ENCODE measurements at regions of chr3 and their contacts with region 1.

Region 1: DNA sequence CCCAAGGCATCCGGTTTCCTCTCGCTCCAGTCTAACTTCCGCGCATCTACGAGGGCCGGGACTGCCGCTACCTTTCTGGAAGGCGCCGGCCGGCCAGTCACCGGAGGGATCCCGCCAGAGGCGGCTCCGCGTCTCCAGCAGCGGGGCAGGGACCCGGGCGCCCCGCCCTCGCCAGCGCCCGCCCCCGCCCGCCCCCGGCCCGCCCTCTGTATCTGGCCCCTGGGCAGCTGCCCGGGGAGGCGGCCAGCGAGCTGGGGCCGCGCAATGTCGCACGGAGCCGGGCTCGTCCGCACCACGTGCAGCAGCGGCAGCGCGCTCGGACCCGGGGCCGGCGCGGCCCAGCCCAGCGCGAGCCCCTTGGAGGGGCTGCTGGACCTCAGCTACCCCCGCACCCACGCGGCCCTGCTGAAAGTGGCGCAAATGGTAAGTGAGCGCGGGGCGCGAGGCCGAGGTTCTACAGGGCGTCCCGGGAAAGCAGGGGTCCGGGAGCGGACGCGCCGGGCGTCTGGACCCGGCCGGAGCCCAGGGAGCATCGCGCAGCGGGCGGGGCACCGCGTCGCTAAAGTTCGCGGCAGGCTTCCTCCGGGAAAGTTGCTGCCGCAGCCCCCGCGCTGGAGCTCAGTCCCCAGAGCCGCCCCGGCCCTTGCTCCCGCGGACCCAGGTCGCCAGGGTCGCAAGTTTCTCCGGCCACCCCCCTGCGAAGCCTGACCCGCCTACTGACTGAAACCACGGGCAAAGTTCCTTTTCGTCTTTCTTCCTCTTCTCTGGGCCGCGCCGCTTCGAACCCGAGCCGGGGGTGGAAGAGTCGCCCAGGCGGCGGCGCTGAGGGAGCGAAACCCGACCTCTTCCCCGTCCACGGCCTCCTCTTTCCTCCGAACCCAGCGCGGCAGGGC is at the start of gene CMTM7:
- DNase-seq: peak; percentile 60
- H3K4me3 Mint-ChIP-seq: peak within 1 kb of the TSS; percentile 97
- H3K27ac Mint-ChIP-seq: peak within 1 kb of the TSS; percentile 97
- H3K4me1 Mint-ChIP-seq: peaks cover 45% of the 10 kb centered on the region
- H3K27me3 Mint-ChIP-seq: no peaks in the 10 kb centered on the region
- total RNA-seq, gene CMTM7: 60.0 and 60.9 TPM in 2 replicates

Region 2: DNA sequence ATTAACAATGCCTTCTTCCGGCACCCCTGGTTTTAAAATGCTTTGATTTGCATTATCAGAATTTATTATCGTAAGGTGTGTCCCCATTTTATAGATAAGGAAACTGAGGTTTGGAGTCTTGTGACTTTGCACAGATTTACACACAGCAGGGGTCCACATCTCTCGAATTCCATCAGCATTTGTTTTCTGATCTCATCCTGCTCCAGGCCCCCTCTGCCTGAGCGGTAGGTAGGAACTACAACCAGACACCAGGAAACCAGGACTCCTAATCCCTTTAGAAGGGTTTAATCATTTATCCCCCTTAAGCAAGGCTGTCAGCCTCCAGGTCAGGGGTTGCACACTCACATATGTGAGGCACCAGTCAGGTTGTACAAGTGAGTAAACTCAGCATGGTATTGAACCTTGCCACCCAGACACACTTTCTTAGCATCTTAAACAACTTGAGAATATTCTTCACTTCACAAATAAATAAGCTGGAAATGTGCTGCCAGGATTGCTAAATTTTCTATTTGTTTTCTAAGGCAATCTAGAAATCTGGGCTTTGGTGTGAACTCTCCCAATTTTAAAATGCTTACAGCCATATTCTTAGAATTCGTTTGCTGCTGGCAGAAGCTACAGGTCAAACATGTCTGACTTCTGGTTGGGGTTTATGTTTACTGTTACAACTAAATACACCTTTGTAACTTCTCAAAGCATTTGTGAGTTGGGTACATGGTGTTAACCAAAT is 32.0 kb before region 1 on chr3:
- intact Hi-C with region 1: no loop called
- DNase-seq: no peak
- H3K4me3 Mint-ChIP-seq: no peak overlapping the region
- H3K27ac Mint-ChIP-seq: no peak overlapping the region
- H3K4me1 Mint-ChIP-seq: no peaks in the 10 kb centered on the region
- H3K27me3 Mint-ChIP-seq: no peaks in the 10 kb centered on the region

Region 3: DNA sequence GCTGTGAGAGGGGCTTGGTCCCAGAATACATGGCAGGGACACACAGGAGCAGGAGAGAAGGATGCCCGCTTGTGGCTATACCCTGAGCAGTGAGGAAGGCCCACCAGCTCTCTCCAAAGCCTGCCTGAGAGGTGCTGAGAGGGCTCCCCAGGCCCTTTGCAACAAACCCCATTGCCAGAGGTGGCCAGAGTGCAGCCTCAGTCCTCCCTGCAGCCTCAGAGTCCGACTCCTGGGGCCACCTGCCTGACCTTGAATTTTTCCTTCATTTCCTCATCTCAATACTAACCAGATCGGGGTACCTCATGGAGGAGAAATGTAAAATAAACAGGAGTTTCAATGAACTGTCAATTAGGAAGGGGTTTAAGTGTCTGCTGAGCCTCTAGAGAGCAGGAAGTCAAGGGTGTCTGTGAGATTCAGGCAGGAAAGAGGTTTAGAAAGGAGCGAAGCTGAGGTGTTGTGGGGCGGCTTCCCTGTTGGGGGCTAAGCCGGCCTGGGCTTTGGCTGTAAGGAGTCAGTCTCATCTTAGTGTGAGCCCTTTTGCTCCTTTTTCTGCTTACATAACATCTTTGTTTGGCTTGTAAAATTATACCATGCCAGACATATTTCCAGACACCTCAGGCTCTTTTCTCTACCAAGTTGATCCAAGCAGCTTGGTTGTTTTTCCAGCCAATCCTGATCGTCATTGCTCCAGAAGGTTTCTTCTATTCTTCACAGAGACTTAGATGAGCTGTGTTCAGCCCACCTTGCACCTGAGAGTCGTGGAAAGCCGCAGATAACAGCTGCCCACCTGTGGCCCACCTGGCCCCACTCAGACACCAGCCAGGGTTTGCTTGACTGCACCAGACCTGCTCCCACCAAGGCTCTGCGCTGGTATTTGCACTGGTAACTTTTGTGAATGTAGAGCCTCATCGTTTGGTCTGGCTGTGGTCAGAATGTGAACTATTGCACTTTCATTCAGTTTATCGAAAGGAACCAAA is 36.5 kb after region 1 on chr3:
- intact Hi-C with region 1: loop called (anchors 2 kb)
- DNase-seq: no peak
- H3K4me3 Mint-ChIP-seq: peak overlapping the region; percentile 35
- H3K27ac Mint-ChIP-seq: peak overlapping the region; percentile 82
- H3K4me1 Mint-ChIP-seq: peaks cover 75% of the 10 kb centered on the region
- H3K27me3 Mint-ChIP-seq: no peaks in the 10 kb centered on the region

Region 4: GRCh38 chr3:32467333-32468070 is 75.6 kb after region 1 on chr3:
- intact Hi-C with region 1: loop called (anchors 2 kb)
- DNase-seq: peak; percentile 59
- H3K4me3 Mint-ChIP-seq: no peak overlapping the region
- H3K27ac Mint-ChIP-seq: no peak overlapping the region
- H3K4me1 Mint-ChIP-seq: peaks cover 29% of the 10 kb centered on the region
- H3K27me3 Mint-ChIP-seq: no peaks in the 10 kb centered on the region

Region 5: DNA sequence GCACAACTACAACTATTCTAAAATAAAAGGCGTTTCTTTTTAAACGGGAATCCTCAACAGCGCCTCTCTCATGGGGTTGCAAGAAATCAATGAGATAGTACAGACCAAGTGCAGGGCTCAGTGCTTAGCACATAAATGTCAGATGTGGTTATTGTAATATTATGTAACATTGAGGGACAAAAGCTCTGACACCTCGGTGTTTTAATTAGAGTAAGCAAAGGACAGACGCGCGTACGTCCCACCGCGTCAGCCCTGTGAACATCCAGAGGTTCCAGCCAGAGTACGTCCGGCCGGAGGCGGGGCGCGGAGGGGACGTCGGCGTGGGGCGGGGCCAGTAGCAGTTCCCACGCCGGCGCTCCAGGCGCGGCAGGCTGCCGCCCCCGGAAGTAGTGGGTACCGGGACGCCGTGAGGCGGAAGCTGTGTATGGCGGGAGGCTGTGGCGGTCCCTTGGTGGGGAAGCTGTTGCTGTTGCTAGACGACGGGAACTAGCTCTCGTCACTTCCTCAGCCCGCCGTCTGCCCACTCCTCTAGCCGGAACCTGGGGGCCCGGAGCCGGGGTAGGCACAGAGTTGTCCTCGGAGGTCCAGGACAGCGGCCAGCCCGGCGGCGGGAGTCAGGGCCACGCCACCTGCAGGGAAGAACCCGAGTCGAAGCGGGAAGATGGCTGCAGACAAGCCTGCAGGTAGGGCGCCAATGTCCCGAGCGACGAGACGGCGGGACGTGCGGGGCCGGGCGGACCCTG is 293.1 kb after region 1 on chr3 and contains the start of gene CNOT10:
- intact Hi-C with region 1: loop called (anchors 10 kb)
- DNase-seq: peak; percentile 97
- H3K4me3 Mint-ChIP-seq: peak within 1 kb of the TSS; percentile 87
- H3K27ac Mint-ChIP-seq: peak within 1 kb of the TSS; percentile 90
- H3K4me1 Mint-ChIP-seq: peaks cover 27% of the 10 kb centered on the region
- H3K27me3 Mint-ChIP-seq: peaks cover 3% of the 10 kb centered on the region
- total RNA-seq, gene CNOT10: 51.5 and 53.5 TPM in 2 replicates